Naive thymus-derived CD8-positive, alpha-beta T cell (primary cell): ENCODE measurements at regions of chr19 and their contacts with region 1.

Region 1: DNA sequence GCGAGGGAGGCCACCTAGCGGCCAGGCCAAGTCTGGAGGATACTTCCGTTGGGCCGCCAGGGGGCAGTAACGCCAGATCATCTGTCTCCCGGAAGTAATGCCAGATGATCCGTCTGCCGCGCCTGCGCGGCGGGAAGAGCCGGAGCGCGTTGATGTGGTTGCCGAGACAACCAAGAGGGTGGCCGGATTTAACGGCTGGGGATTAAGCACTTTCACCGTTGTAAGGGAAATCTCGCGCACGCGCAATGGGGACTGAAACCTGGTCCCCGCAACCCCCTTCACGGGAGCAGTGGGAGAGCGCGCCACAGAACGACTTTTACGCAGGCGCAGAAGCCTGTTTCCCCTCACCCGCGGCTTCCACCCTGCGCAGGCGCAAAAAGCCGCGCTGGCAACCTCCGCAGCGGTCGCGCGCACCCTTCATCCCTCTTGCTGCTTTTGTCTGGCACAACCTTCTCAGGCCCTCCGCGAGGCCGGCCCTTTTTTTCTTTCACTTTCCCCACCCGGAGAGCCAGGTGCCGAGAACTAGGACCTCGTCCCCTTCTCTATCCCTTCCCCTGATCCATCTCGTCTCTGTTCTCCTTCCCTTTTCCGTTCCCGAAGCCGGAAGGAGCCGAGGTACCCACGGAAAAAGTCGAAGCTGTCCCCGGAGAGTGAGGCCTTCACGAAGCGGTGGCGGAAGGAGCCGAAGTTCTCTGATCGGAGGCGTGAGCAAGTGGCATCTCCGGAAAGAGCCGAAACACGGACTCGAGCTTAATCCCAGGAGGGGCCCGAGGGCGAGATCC is 886 bp upstream of the U2AF2 start:
- DNase-seq: peak; percentile 99 to 100 (median 100)
- ATAC-seq: peak; percentile 80 to 81
- H3K4me3 Mint-ChIP-seq: peak overlapping the region; percentile 88 to 99 (median 97)
- H3K27ac Mint-ChIP-seq: peak overlapping the region; percentile 97 to 100 (median 99)
- H3K4me1 Mint-ChIP-seq: peaks cover 25 to 56% (median 54%) of the 10 kb centered on the region in 4 donors
- H3K27me3 Mint-ChIP-seq: no peaks in the 10 kb centered on the region

Region 2: DNA sequence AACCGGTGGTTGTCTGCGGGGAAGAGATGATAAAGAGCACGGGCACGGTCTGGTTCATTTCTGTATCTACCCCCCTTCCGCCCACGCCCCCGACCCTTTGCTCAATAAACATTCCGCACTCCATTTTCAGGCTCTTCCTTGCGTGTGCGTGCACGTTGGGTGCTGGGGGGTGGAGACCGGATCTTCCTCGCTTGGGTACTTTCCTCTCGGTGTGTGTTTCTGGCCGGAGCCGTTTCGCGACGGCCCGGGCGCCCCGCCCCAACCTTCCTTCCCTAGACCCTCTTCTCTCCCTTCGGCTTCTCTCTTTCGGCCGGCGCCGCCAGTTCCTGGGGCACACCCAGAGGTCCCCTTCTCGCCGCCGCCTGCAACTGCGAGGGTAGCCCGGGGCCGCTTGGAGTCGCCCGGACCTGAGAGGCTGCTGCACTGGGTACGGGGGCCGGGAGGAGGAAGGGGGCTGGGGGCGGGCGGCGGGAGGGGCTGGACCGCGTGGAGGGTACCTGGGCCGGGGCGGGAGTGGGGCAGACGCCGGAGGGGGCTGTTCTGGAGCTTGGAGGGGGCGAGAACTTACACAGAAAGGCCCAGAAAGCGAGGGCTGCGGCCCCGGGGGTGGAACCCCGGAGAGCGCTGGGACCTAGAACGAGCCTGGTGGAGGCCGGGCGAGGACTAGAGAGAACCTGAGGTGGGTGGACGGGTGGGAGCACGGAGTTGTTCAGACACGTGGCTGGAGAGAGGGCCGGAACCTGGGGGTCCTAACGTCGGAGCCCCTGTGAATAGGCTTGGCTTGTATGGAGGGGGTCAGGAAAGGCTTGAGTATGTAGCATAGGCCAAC is 10.4 kb before region 1 on chr19 and contains the start of gene ZNF581:
- POLR2A ChIA-PET with region 1: interaction called, 148 read pairs
- DNase-seq: peak; percentile 67 to 86 (median 76)
- ATAC-seq: peak; percentile 45 to 51
- H3K4me3 Mint-ChIP-seq: peak within 1 kb of the TSS; percentile 91 to 99 (median 94)
- H3K27ac Mint-ChIP-seq: peak within 1 kb of the TSS; percentile 94 to 99 (median 98)
- H3K4me1 Mint-ChIP-seq: peaks cover 30 to 64% (median 60%) of the 10 kb centered on the region in 4 donors
- H3K27me3 Mint-ChIP-seq: no peaks in the 10 kb centered on the region
- polyA plus RNA-seq, gene ZNF581: 21.2 to 35.9 (median 34.9) TPM

Region 3: GRCh38 chr19:55693336-55693974 is 39.5 kb after region 1 on chr19:
- POLR2A ChIA-PET with region 1: no interaction called
- DNase-seq: peak in 1 of 10 donors; percentile 18
- ATAC-seq: no peak
- H3K4me3 Mint-ChIP-seq: no peak overlapping the region
- H3K27ac Mint-ChIP-seq: no peak overlapping the region
- H3K4me1 Mint-ChIP-seq: peaks cover 0 to 3% (median 1%) of the 10 kb centered on the region in 4 donors
- H3K27me3 Mint-ChIP-seq: no peaks in the 10 kb centered on the region